ENCODE measurements at regions of chr12 and their contacts with region 1.

Region 1: DNA sequence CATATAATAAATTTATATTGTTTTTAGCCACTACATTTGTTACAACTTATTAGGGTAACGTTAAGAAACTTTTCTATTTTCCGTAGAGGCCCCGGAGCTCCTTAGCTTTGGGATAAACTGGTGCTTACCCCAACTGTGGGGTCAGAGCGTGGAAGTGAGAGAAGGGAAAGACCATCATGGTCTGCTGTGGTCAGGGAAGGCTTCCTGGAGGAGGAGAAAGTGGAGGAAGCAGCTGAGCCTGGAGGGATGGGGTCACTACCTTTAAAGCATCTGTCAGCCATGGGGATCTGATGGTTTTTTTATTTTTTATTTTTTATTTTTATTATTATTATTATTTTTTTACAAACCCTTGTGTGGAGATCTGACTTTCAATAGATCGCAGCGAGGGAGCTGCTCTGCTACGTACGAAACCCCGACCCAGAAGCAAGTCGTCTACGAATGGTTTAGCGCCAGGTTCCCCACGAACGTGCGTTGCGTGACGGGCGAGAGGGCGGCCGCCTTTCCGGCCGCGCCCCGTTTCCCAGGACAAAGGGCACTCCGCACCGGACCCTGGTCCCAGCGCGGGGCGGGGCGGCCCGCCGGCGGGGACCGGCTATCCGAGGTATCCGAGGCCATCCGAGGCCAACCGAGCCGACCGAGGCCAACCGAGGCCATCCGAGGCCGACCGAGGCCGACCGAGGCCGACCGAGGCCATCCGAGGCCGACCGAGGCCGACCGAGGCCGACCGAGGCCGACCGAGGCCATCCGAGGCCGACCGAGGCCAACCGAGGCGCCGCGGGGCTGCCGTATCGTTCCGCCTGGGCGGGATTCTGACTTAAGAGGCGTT is 1101.2 kb upstream of the TMEM132C start:
- DNase-seq: peak; percentile 71
- H3K4me3 Mint-ChIP-seq: peak overlapping the region; percentile 79
- H3K27ac Mint-ChIP-seq: peak overlapping the region; percentile 69
- H3K4me1 Mint-ChIP-seq: peaks cover 20% of the 10 kb centered on the region
- H3K27me3 Mint-ChIP-seq: peaks cover 2% of the 10 kb centered on the region

Region 2: GRCh38 chr12:127083008-127083949 is 82.5 kb before region 1 on chr12:
- intact Hi-C with region 1: loop called (anchors 10 kb)
- DNase-seq: peak; percentile 11
- H3K4me3 Mint-ChIP-seq: peak overlapping the region; percentile 60
- H3K27ac Mint-ChIP-seq: no peak overlapping the region
- H3K4me1 Mint-ChIP-seq: peaks cover 10% of the 10 kb centered on the region
- H3K27me3 Mint-ChIP-seq: peaks cover 2% of the 10 kb centered on the region

Region 3: GRCh38 chr12:127125607-127126259 is 40.0 kb before region 1 on chr12:
- intact Hi-C with region 1: loop called (anchors 2 kb)
- DNase-seq: no peak
- H3K4me3 Mint-ChIP-seq: no peak overlapping the region
- H3K27ac Mint-ChIP-seq: peak overlapping the region; percentile 56
- H3K4me1 Mint-ChIP-seq: peaks cover 8% of the 10 kb centered on the region
- H3K27me3 Mint-ChIP-seq: peaks cover 1% of the 10 kb centered on the region

Region 4: DNA sequence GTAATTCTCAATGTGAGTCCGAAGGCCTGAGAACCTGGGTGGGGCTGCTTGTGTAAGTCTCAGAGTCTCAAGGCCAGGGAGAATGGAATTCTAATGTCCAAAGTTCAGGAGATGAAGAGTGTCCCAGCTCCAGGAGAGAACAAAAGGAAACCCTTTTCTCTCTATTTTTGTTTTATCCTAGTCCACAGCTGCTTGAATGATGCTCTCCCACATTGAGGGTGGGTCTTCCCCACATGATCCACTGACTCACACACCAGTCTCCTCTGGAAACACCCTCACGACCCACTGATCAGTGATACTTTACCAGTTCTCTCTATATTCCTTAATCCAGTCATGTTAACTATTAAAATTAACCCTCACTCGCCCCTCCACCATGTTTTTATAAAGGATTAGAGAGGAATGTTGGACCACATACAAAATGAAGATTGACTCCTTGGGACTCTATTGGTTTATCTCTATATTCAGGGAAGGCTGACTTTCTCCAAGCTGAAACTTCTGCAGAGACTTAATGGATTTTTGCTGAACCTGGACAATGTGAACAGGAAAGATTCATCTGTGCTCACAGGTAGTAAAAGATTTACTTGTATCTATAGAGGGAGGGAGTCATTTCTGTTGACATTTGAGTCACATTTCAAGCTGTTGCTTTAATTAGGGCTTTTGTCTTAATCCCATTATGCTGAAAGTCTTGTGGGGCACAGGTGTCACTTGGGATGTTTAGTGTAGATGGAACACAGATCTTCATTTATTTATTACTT is 40.2 kb after region 1 on chr12:
- intact Hi-C with region 1: no loop called
- DNase-seq: no peak
- H3K4me3 Mint-ChIP-seq: no peak overlapping the region
- H3K27ac Mint-ChIP-seq: no peak overlapping the region
- H3K4me1 Mint-ChIP-seq: no peaks in the 10 kb centered on the region
- H3K27me3 Mint-ChIP-seq: no peaks in the 10 kb centered on the region